Endothelial cell of umbilical vein (primary cell): ENCODE measurements at regions of chr2 and their contacts with region 1.

Region 1: GRCh38 chr2:230793572-230794359 is 71.0 kb upstream of the ITM2C start:
- DNase-seq: peak; percentile 98
- H3K4me3 ChIP-seq: peak overlapping the region in 1 of 3 experiments; percentile 20
- H3K27ac ChIP-seq: peak overlapping the region; percentile 97
- H3K4me1 ChIP-seq: peaks cover 37% of the 10 kb centered on the region
- H3K27me3 ChIP-seq: no peaks in the 10 kb centered on the region
- CTCF ChIP-seq: no peak
- POLR2A ChIP-seq: peak; percentile 46

Region 2: DNA sequence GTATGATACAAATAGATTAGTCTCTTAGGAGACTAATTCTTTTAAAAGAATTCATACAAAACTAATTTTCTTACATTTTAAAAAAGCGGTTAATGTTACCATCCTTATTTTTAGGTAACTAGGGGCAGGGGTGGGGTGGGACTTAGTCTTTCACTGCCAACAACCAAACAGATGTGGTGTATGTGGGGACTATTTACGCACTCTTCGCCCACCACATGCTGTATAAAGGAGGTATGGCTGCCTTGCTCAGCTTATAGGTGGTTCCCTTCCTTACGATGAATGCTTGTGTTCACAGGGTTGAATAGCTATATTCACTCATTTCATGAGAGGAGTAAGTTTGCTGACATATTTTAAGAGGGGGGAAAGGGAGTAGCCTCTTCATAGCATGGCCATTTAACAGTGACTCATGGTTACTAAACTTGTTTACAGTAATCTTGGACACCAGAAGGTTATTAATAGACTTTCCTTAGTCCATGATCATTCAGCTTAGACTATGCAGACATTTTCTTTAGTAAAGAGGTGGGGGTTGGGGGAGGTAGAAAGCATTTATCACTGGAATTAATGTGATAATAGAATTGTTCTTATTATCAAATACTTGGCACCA is 19.3 kb before region 1 on chr2:
- CTCF ChIA-PET with region 1: interaction called, 8 read pairs
- POLR2A ChIA-PET with region 1: no interaction called
- dilution Hi-C with region 1: no loop called
- intact Hi-C with region 1: loop called (anchors 1 kb)
- DNase-seq: peak; percentile 74
- H3K4me3 ChIP-seq: no peak overlapping the region
- H3K27ac ChIP-seq: peak overlapping the region; percentile 82
- H3K4me1 ChIP-seq: peaks cover 44% of the 10 kb centered on the region
- H3K27me3 ChIP-seq: no peaks in the 10 kb centered on the region
- CTCF ChIP-seq: no peak
- POLR2A ChIP-seq: no peak

Region 3: GRCh38 chr2:230846360-230846759 is 52.6 kb after region 1 on chr2:
- CTCF ChIA-PET with region 1: no interaction called
- POLR2A ChIA-PET with region 1: no interaction called
- dilution Hi-C with region 1: no loop called
- intact Hi-C with region 1: no loop called
- DNase-seq: no peak
- H3K4me3 ChIP-seq: no peak overlapping the region
- H3K27ac ChIP-seq: no peak overlapping the region
- H3K4me1 ChIP-seq: no peaks in the 10 kb centered on the region
- H3K27me3 ChIP-seq: peaks cover 3 to 7% of the 10 kb centered on the region in 2 experiments
- CTCF ChIP-seq: no peak
- POLR2A ChIP-seq: no peak

Region 4: GRCh38 chr2:231110551-231110950 is 316.8 kb after region 1 on chr2:
- CTCF ChIA-PET with region 1: no interaction called
- POLR2A ChIA-PET with region 1: no interaction called
- dilution Hi-C with region 1: no loop called
- intact Hi-C with region 1: no loop called
- DNase-seq: peak; percentile 84
- H3K4me3 ChIP-seq: no peak overlapping the region
- H3K27ac ChIP-seq: no peak overlapping the region
- H3K4me1 ChIP-seq: peaks cover 12% of the 10 kb centered on the region
- H3K27me3 ChIP-seq: no peaks in the 10 kb centered on the region
- CTCF ChIP-seq: peak; percentile 15 to 30
- POLR2A ChIP-seq: no peak